ENCODE measurements at regions of chr2 and their contacts with region 1.

Region 1: GRCh38 chr2:39919511-39920306 is 140.7 kb upstream of the THUMPD2 start:
- DNase-seq: peak in 3 of 10 donors; percentile 60 to 76 (median 69)

Region 2: DNA sequence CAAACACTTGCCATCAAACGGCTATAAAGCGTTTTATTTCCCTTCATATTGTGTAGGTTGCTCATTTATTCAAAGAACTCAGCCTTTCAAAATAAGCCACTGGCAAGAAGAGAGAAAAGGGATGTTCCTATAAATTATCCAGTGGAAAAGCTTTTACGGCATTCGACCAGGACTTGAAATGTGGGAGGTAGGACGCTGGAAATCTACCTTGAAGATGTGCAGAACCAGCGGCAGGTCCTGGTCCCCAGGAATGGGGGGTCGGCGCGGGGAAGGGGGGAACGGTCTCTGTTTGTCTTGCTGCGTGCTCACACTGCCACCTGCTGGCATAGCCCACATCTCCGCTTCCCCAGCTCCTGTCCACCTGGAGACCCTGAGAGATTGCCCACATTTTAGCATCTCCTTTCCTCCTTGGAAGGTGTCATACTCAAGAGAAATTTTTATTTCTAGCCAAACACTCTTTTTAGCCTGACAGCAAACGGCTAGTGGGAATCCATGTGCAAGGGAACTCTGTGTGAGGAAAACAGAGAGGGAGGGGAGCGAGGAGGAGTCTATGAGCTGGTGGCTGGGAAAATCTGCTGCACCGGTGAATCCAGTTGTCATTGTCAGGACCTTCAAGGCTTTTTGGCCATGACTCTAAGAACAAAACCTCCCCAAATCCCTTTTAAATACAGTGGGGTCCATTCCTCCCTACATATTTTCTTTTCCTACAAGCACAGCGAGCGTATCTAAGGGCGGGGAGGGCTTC is 1779.1 kb after region 1 on chr2:
- intact Hi-C with region 1: loop called (anchors 5 kb)
- DNase-seq: peak; percentile 38 to 93 (median 62)

Measured in posterior cingulate gyrus (tissue), 11 donors.